Naive thymus-derived CD4-positive, alpha-beta T cell (primary cell): ENCODE measurements at regions of chr1 and their contacts with region 1.

Region 1: GRCh38 chr1:155084722-155085503 is 6.3 kb downstream of the EFNA3 start:
- DNase-seq: peak; percentile 87 to 96 (median 93)
- ATAC-seq: peak; percentile 86
- H3K4me3 ChIP-seq: peak overlapping the region; percentile 97
- H3K4me3 Mint-ChIP-seq: peak overlapping the region; percentile 88 to 100 (median 94)
- H3K27ac ChIP-seq: peak overlapping the region; percentile 63
- H3K27ac Mint-ChIP-seq: peak overlapping the region; percentile 88 to 98 (median 93)
- H3K4me1 ChIP-seq: peaks cover 51 to 53% of the 10 kb centered on the region in 2 donors
- H3K4me1 Mint-ChIP-seq: peaks cover 24 to 43% (median 41%) of the 10 kb centered on the region in 7 donors
- H3K27me3 ChIP-seq: peaks cover 28 to 31% of the 10 kb centered on the region in 2 donors
- H3K27me3 Mint-ChIP-seq: peaks cover 17 to 41% (median 23%) of the 10 kb centered on the region in 5 donors

Region 2: DNA sequence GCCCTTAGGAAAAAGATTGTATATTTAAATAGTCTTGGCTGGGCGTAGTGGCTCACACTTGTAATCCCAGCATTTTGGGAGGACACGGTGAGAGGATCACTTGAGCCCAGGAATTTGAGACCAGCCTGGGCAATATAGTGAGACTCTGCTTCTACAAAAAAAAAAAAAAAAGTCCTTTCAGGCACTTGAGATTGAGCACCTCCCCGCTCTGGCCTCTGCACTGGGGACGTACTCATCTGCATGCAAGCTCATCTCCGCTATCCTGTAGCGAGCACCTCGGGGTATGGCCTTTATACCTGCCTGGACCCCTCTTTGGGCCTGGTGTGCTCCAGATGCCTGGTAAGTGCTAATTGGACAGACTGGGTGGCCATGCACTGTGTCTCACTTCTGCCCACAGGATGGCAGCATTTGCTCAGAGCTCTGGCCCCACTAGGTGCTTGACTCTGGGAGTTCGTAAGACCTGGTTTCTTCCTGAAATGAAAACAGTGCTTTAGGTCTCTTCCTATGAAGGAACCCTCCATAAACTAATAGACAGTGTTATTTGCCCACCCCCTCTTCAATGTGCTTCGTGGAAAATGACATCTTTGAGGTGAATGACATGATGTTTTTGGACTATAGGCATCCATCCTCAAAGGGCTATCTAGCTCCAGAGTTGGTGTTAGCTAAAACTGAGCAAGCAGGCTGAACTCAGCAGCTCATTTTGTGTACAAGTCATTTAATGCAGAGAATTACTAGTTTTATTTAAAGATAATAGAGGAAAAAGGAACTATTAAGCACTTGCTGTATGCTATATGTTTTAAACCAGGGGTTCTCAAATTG is 415.2 kb before region 1 on chr1:
- CTCF ChIA-PET with region 1: no interaction called
- POLR2A ChIA-PET with region 1: no interaction called
- intact Hi-C with region 1: loop called in 1 of 2 experiments (anchors 1 kb)
- DNase-seq: peak; percentile 40 to 81 (median 73)
- ATAC-seq: peak; percentile 100
- H3K4me3 ChIP-seq: no peak overlapping the region
- H3K4me3 Mint-ChIP-seq: no peak overlapping the region
- H3K27ac ChIP-seq: no peak overlapping the region
- H3K27ac Mint-ChIP-seq: peak overlapping the region in 1 of 9 donors; percentile 30
- H3K4me1 ChIP-seq: no peaks in the 10 kb centered on the region
- H3K4me1 Mint-ChIP-seq: peaks cover 0 to 13% (median 5%) of the 10 kb centered on the region in 7 donors
- H3K27me3 ChIP-seq: no peaks in the 10 kb centered on the region
- H3K27me3 Mint-ChIP-seq: peaks cover 0 to 4% (median 0%) of the 10 kb centered on the region in 5 donors

Region 3: GRCh38 chr1:154955718-154956543 is 129.0 kb before region 1 on chr1 and contains the start of gene PBXIP1:
- CTCF ChIA-PET with region 1: interaction called, 7 read pairs
- POLR2A ChIA-PET with region 1: interaction called, 6 read pairs
- intact Hi-C with region 1: loop called (anchors 1 to 5 kb)
- DNase-seq: peak; percentile 56 to 95 (median 92)
- ATAC-seq: peak; percentile 58
- H3K4me3 ChIP-seq: peak within 1 kb of the TSS; percentile 92
- H3K4me3 Mint-ChIP-seq: peak within 1 kb of the TSS; percentile 92 to 99 (median 98)
- H3K27ac ChIP-seq: peak within 1 kb of the TSS; percentile 96
- H3K27ac Mint-ChIP-seq: peak within 1 kb of the TSS; percentile 97 to 100 (median 99)
- H3K4me1 ChIP-seq: peaks cover 53 to 54% of the 10 kb centered on the region in 2 donors
- H3K4me1 Mint-ChIP-seq: peaks cover 59 to 87% (median 76%) of the 10 kb centered on the region in 7 donors
- H3K27me3 ChIP-seq: no peaks in the 10 kb centered on the region
- H3K27me3 Mint-ChIP-seq: no peaks in the 10 kb centered on the region
- total RNA-seq, gene PBXIP1: 107 to 390 (median 383) TPM

Region 4: GRCh38 chr1:155044812-155045690 is 39.9 kb before region 1 on chr1:
- CTCF ChIA-PET with region 1: interaction called, 18 read pairs
- POLR2A ChIA-PET with region 1: interaction called, 3 read pairs
- intact Hi-C with region 1: loop called (anchors 1 kb)
- DNase-seq: peak in 7 of 9 donors; percentile 49 to 70 (median 58)
- ATAC-seq: peak; percentile 96
- H3K4me3 ChIP-seq: no peak overlapping the region
- H3K4me3 Mint-ChIP-seq: no peak overlapping the region
- H3K27ac ChIP-seq: no peak overlapping the region
- H3K27ac Mint-ChIP-seq: peak overlapping the region in 1 of 9 donors; percentile 52
- H3K4me1 ChIP-seq: no peaks in the 10 kb centered on the region
- H3K4me1 Mint-ChIP-seq: peaks cover 4 to 21% (median 14%) of the 10 kb centered on the region in 7 donors
- H3K27me3 ChIP-seq: no peaks in the 10 kb centered on the region
- H3K27me3 Mint-ChIP-seq: peaks cover 0 to 4% (median 0%) of the 10 kb centered on the region in 5 donors

Region 5: GRCh38 chr1:155050560-155051341 is 34.2 kb before region 1 on chr1 and contains the start of gene ADAM15:
- CTCF ChIA-PET with region 1: interaction called, 131 read pairs
- POLR2A ChIA-PET with region 1: interaction called, 4 read pairs
- intact Hi-C with region 1: loop called (anchors 1 kb)
- DNase-seq: peak; percentile 56 to 88 (median 74)
- ATAC-seq: peak; percentile 90
- H3K4me3 ChIP-seq: peak within 1 kb of the TSS; percentile 66
- H3K4me3 Mint-ChIP-seq: peak within 1 kb of the TSS; percentile 74 to 91 (median 88)
- H3K27ac ChIP-seq: peak within 1 kb of the TSS; percentile 72
- H3K27ac Mint-ChIP-seq: peak within 1 kb of the TSS in 8 of 9 donors; percentile 47 to 85 (median 70)
- H3K4me1 ChIP-seq: peaks cover 5 to 13% of the 10 kb centered on the region in 2 donors
- H3K4me1 Mint-ChIP-seq: peaks cover 14 to 31% (median 23%) of the 10 kb centered on the region in 7 donors
- H3K27me3 ChIP-seq: no peaks in the 10 kb centered on the region
- H3K27me3 Mint-ChIP-seq: no peaks in the 10 kb centered on the region
- total RNA-seq, gene ADAM15: 16.9 to 53.7 (median 28.8) TPM

Region 6: GRCh38 chr1:155070721-155071569 is 14.0 kb before region 1 on chr1:
- CTCF ChIA-PET with region 1: interaction called, 131 read pairs
- POLR2A ChIA-PET with region 1: interaction called, 51 read pairs
- intact Hi-C with region 1: loop called in 1 of 2 experiments (anchors 1 kb)
- DNase-seq: peak; percentile 64 to 85 (median 79)
- ATAC-seq: peak; percentile 98
- H3K4me3 ChIP-seq: peak overlapping the region; percentile 56
- H3K4me3 Mint-ChIP-seq: peak overlapping the region; percentile 53 to 77 (median 58)
- H3K27ac ChIP-seq: peak overlapping the region; percentile 66
- H3K27ac Mint-ChIP-seq: peak overlapping the region in 7 of 9 donors; percentile 43 to 86 (median 64)
- H3K4me1 ChIP-seq: peaks cover 6 to 16% of the 10 kb centered on the region in 2 donors
- H3K4me1 Mint-ChIP-seq: peaks cover 17 to 50% (median 42%) of the 10 kb centered on the region in 7 donors
- H3K27me3 ChIP-seq: no peaks in the 10 kb centered on the region
- H3K27me3 Mint-ChIP-seq: peaks cover 0 to 9% (median 0%) of the 10 kb centered on the region in 5 donors

Region 7: GRCh38 chr1:155135415-155136028 is 50.6 kb after region 1 on chr1 and contains the start of gene SLC50A1:
- CTCF ChIA-PET with region 1: interaction called, 6 read pairs
- POLR2A ChIA-PET with region 1: no interaction called
- intact Hi-C with region 1: loop called (anchors 2 to 5 kb)
- DNase-seq: peak; percentile 86 to 96 (median 90)
- ATAC-seq: peak; percentile 93
- H3K4me3 ChIP-seq: peak within 1 kb of the TSS; percentile 99
- H3K4me3 Mint-ChIP-seq: peak within 1 kb of the TSS; percentile 91 to 100 (median 98)
- H3K27ac ChIP-seq: peak within 1 kb of the TSS; percentile 99
- H3K27ac Mint-ChIP-seq: peak within 1 kb of the TSS; percentile 95 to 100 (median 98)
- H3K4me1 ChIP-seq: peaks cover 8 to 15% of the 10 kb centered on the region in 2 donors
- H3K4me1 Mint-ChIP-seq: peaks cover 41 to 58% (median 46%) of the 10 kb centered on the region in 7 donors
- H3K27me3 ChIP-seq: no peaks in the 10 kb centered on the region
- H3K27me3 Mint-ChIP-seq: peaks cover 0 to 2% (median 0%) of the 10 kb centered on the region in 5 donors
- total RNA-seq, gene SLC50A1: 21.1 to 35.6 (median 24.3) TPM